Left cardiac atrium (tissue), 4 donors: ENCODE measurements at regions of chr1 and their contacts with region 1.

Region 1: GRCh38 chr1:209747580-209748262 is 8.1 kb upstream of the TRAF3IP3 start:
- DNase-seq: peak; percentile 94
- ATAC-seq: peak; percentile 96 to 99

Region 2: GRCh38 chr1:209576798-209577197 is 170.9 kb before region 1 on chr1:
- intact Hi-C with region 1: loop called in 1 of 2 experiments (anchors 2 kb)
- DNase-seq: peak; percentile 82
- ATAC-seq: peak; percentile 94 to 96